Cardiac septum (tissue), 1 donor: ENCODE measurements at regions of chrX and their contacts with region 1.

Region 1: GRCh38 chrX:5113128-5113527 is 1115.5 kb downstream of the NLGN4X start:
- DNase-seq: no peak

Region 2: GRCh38 chrX:4547213-4547836 is 565.8 kb before region 1 on chrX:
- intact Hi-C with region 1: loop called (anchors 5 kb)
- DNase-seq: no peak